A549 (cell line): ENCODE measurements at regions of chr5 and their contacts with region 1.

Region 1: DNA sequence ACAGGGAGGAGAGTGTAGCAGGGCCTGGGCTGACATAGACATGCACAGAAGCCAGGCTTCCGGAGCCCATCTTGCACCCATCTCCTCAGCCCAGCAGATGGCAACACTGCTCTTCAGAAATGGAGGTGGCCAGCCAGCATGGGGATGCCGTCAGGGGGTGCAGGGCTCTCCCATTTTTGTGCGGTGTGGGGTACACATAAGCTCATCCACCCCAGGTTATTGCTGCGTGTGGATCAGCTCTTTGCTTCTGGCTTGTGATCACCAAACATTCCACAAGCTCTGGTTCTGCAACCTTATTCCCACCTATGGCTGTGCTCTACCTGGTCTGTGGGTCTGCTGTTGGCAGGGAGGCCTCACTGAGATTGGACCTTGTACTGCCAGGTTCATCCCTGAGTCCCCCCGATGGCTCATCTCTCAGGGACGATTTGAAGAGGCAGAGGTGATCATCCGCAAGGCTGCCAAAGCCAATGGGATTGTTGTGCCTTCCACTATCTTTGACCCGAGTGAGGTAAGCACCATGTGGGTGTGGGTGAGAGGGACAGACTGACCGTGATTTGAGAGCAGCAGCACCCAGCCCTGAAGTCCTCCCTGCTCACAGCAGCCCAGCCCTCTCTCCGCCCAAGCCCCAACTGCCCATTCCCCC is 17.3 kb downstream of the SLC22A5 start:
- DNase-seq: peak; percentile 80 to 81
- ATAC-seq: peak; percentile 66 to 82
- H3K4me3 ChIP-seq: no peak overlapping the region
- H3K27ac ChIP-seq: peak overlapping the region; percentile 92 to 94
- H3K4me1 ChIP-seq: peaks cover 66% of the 10 kb centered on the region
- CTCF ChIP-seq: peak; percentile 91
- EP300 ChIP-seq: no peak
- POLR2A ChIP-seq: no peak
- RAD21 ChIP-seq: peak; percentile 96

Region 2: DNA sequence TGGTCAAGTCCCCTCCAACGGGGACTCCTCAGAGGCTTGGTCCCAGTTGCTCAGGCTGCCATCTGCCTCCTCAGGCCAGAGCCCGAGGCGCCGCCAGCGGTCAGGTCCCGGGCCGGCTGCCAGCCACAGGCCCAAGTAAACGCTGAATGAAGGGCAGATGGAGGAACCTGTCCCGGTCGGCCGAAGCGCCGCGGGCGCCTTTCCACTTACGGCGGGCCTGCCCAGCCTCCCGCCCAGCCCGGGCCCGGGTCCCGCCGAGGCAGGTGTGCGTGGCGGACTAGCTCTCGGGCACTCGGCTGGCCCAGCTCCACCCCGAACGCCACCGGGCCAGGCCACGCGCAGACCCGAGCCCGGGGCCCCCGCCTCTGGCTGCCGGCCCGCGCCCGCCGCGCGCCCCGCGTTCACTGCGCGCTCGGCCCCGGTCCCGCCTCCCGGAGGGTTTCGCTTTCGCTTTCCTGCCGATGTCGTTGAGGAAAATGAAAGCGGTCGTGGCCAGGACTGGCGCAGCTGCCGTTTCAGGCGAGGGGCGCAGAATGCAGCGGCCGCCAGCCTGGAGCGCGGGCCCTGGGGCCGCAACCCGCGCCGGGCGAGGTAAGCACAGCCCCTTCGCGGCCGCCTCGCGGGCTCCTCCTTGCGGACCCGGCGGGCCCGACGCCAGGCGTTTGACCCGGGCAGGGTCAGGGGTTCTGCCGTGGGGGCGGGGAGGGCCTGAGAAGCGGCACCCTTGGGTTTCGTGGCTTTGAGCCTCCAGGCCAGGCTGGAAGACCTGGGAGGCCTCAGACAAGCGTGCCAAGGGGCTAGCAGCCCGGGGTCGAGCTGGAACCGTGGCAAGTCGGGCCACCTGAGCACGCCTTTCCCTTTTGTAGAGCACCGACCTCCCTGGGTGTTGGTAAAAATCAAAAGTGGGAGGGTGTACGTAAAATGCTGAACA is 24.0 kb after region 1 on chr5:
- CTCF ChIA-PET with region 1: interaction called, 152 read pairs
- POLR2A ChIA-PET with region 1: interaction called, 4 read pairs
- DNase-seq: peak; percentile 79 to 87
- ATAC-seq: peak; percentile 94 to 95
- H3K4me3 ChIP-seq: peak overlapping the region; percentile 69
- H3K27ac ChIP-seq: peak overlapping the region; percentile 96 to 98
- H3K4me1 ChIP-seq: peaks cover 33% of the 10 kb centered on the region
- CTCF ChIP-seq: peak; percentile 74
- EP300 ChIP-seq: no peak
- POLR2A ChIP-seq: peak; percentile 73
- RAD21 ChIP-seq: peak; percentile 52 to 78

Region 3: DNA sequence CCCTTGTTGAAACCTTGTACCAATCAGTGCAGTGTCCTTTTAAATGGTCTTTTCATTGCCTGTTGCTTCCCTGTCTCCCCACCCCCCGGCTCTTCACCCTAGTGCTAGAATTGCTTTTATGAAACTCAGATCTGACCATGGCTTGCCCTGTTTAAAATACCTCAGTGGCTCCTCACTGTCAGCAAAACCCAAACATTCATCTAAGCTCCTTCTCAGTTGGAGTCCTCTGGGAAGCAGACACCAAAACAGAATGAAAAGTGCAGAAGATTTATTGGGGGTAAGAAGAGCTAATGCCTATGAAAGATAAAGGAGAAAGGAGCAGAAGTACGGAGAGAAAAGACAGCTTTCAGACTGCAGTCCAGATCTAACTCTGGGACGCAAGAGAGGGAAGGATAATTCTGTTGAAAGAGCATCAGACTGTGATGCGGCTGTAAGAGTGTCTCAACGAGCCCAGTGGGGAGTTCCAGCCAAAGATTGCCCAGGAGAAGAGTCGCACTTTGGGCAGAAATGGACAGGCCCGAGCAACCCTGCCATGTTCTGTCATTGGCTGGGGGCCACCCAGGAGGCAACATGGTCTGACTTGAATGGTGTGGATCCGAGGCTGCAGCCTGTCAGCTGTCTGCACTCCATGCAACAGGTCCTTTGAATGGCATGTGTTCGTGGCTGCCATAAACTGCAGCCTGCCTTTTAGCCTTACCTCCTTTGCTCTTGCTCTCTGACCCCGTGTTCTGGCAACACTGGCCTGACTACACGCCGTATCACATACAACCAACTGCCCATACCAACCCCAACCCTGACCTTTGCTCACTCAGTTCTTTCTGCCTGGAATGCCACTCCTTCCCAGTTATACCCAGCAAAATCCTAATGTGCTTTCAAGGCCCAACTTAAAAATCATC is 47.9 kb after region 1 on chr5:
- CTCF ChIA-PET with region 1: interaction called, 16 read pairs
- POLR2A ChIA-PET with region 1: no interaction called
- DNase-seq: no peak
- ATAC-seq: no peak
- H3K4me3 ChIP-seq: no peak overlapping the region
- H3K27ac ChIP-seq: no peak overlapping the region
- H3K4me1 ChIP-seq: peaks cover 12% of the 10 kb centered on the region
- CTCF ChIP-seq: no peak
- EP300 ChIP-seq: no peak
- POLR2A ChIP-seq: no peak
- RAD21 ChIP-seq: no peak

Region 4: GRCh38 chr5:132490486-132491367 is 104.0 kb after region 1 on chr5 and contains the start of gene IRF1:
- CTCF ChIA-PET with region 1: interaction called, 217 read pairs
- POLR2A ChIA-PET with region 1: interaction called, 49 read pairs
- DNase-seq: peak; percentile 95 to 97
- ATAC-seq: peak; percentile 86 to 94
- H3K4me3 ChIP-seq: peak within 1 kb of the TSS; percentile 83
- H3K27ac ChIP-seq: peak within 1 kb of the TSS; percentile 92 to 96
- H3K4me1 ChIP-seq: peaks cover 36% of the 10 kb centered on the region
- CTCF ChIP-seq: no peak; the same call in 2 of the 3 replicates
- EP300 ChIP-seq: no peak
- POLR2A ChIP-seq: peak; percentile 94
- RAD21 ChIP-seq: no peak
- polyA plus RNA-seq, gene IRF1: 10.9 and 11.2 TPM in 2 replicates

Region 5: GRCh38 chr5:132506094-132506692 is 119.4 kb after region 1 on chr5:
- CTCF ChIA-PET with region 1: interaction called, 217 read pairs
- POLR2A ChIA-PET with region 1: interaction called, 3 read pairs
- DNase-seq: peak; percentile 63 to 64
- ATAC-seq: peak; percentile 87 to 91
- H3K4me3 ChIP-seq: no peak overlapping the region
- H3K27ac ChIP-seq: 0 out of 6 replicates have a peak overlapping the region, but pooled peaks of 1 of the 2 experiments have one; percentile 15
- H3K4me1 ChIP-seq: peaks cover 9% of the 10 kb centered on the region
- CTCF ChIP-seq: peak; percentile 48
- EP300 ChIP-seq: no peak
- POLR2A ChIP-seq: no peak
- RAD21 ChIP-seq: peak in 1 of 2 experiments; percentile 51; a peak in 2 of 5 replicates